ENCODE measurements at regions of chr3 and their contacts with region 1.

Region 1: GRCh38 chr3:143535994-143536784 is 312.1 kb downstream of the SLC9A9 start:
- DNase-seq: no peak
- H3K4me3 Mint-ChIP-seq: no peak overlapping the region
- H3K27ac Mint-ChIP-seq: no peak overlapping the region
- H3K4me1 Mint-ChIP-seq: peaks cover 24% of the 10 kb centered on the region
- H3K27me3 Mint-ChIP-seq: no peaks in the 10 kb centered on the region

Region 2: DNA sequence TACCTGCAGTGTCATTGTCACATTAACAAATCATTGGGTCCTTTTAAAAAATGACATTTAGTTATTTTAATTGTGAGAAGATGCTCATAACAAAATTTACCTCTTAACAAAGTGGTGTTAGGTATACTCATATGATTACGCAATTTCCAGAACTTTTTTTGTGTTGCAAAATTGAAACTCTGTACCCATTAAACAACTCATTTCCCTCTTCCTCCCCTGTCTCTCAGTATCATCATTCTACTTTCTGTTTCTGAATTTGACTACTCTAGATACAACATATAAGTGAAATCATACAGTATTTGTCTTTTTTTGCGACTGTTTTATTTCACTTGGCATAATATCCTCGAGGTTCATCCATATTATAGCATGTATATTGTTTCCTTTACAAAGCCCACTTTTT is 475.3 kb before region 1 on chr3:
- CTCF ChIA-PET with region 1: no interaction called
- POLR2A ChIA-PET with region 1: no interaction called
- intact Hi-C with region 1: loop called (anchors 2 kb)
- DNase-seq: no peak
- H3K4me3 Mint-ChIP-seq: no peak overlapping the region
- H3K27ac Mint-ChIP-seq: peak overlapping the region; percentile 42
- H3K4me1 Mint-ChIP-seq: peaks cover 22% of the 10 kb centered on the region
- H3K27me3 Mint-ChIP-seq: no peaks in the 10 kb centered on the region

Region 3: GRCh38 chr3:143165211-143165610 is 371.0 kb before region 1 on chr3:
- CTCF ChIA-PET with region 1: no interaction called
- POLR2A ChIA-PET with region 1: no interaction called
- intact Hi-C with region 1: loop called (anchors 1 kb)
- DNase-seq: no peak
- H3K4me3 Mint-ChIP-seq: peak overlapping the region; percentile 22
- H3K27ac Mint-ChIP-seq: peak overlapping the region; percentile 87
- H3K4me1 Mint-ChIP-seq: peaks cover 56% of the 10 kb centered on the region
- H3K27me3 Mint-ChIP-seq: peaks cover 2% of the 10 kb centered on the region

Region 4: DNA sequence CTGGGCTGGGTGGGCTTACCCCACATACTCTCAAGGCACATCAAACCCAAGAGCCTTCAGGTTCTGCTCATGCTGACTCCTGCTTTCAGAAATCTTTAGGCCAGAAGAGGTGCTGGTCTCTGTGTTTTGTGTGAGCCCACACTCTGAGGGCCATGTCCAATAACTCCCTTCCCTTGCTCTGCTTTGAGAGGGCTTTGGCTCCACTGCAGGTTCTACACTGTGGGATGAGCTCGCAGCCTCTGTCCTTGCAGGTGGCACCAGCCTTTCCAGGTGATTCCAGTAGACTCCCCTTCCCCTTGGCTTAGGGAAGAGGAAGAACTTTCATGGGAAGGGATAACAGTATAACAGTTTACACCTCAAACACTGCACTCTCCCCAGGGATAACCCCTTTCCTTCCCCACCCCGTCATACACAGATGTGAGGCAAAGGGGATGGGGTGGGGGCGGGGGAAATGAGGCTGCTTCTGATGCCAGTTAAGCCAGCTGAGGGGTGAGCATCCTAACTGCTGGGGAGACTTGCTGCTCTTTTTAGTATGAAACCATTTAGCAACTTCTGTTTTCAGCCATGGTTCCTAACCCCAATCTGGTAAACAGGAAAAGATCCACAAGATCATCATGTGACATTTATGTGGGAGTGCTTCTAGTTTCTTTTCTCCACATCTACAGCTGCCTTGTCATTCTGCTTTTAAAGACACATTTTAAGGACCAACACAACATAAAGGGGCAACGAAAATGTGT is 49.7 kb after region 1 on chr3:
- CTCF ChIA-PET with region 1: no interaction called
- POLR2A ChIA-PET with region 1: no interaction called
- intact Hi-C with region 1: loop called (anchors 1 kb)
- DNase-seq: peak; percentile 48
- H3K4me3 Mint-ChIP-seq: no peak overlapping the region
- H3K27ac Mint-ChIP-seq: no peak overlapping the region
- H3K4me1 Mint-ChIP-seq: peaks cover 6% of the 10 kb centered on the region
- H3K27me3 Mint-ChIP-seq: no peaks in the 10 kb centered on the region

Region 5: GRCh38 chr3:143831208-143831607 is 295.0 kb after region 1 on chr3:
- CTCF ChIA-PET with region 1: no interaction called
- POLR2A ChIA-PET with region 1: no interaction called
- intact Hi-C with region 1: loop called (anchors 5 kb)
- DNase-seq: no peak
- H3K4me3 Mint-ChIP-seq: peak overlapping the region; percentile 17
- H3K27ac Mint-ChIP-seq: peak overlapping the region; percentile 20
- H3K4me1 Mint-ChIP-seq: peaks cover 54% of the 10 kb centered on the region
- H3K27me3 Mint-ChIP-seq: no peaks in the 10 kb centered on the region

Measured in activated CD4-positive, alpha-beta memory T cell treated with anti-CD3 and anti-CD28 coated beads for 36 hours (primary cell).